Heart right ventricle (tissue), 16 donors: ENCODE measurements at regions of chr17 and their contacts with region 1.

Region 1: GRCh38 chr17:57415751-57416207 is 159.5 kb downstream of the MSI2 start:
- DNase-seq: no peak
- ATAC-seq: peak in 7 of 8 donors; percentile 36 to 71 (median 55)
- H3K4me3 ChIP-seq: no peak overlapping the region
- H3K27ac ChIP-seq: no peak overlapping the region
- H3K4me1 ChIP-seq: peaks cover 0 to 16% (median 6%) of the 10 kb centered on the region in 9 donors
- H3K27me3 ChIP-seq: no peaks in the 10 kb centered on the region
- CTCF ChIP-seq: no peak

Region 2: GRCh38 chr17:57370037-57370581 is 45.7 kb before region 1 on chr17:
- intact Hi-C with region 1: loop called in 1 of 10 experiments (anchors 10 kb)
- DNase-seq: no peak
- ATAC-seq: no peak
- H3K4me3 ChIP-seq: no peak overlapping the region
- H3K27ac ChIP-seq: peak overlapping the region; percentile 1 to 76 (median 38)
- H3K4me1 ChIP-seq: peaks cover 14 to 61% (median 47%) of the 10 kb centered on the region in 9 donors
- H3K27me3 ChIP-seq: no peaks in the 10 kb centered on the region
- CTCF ChIP-seq: no peak